ENCODE measurements at regions of chr14 and their contacts with region 1.

Region 1: GRCh38 chr14:70073924-70074566 is 114.7 kb downstream of the SLC8A3 start:
- DNase-seq: peak; percentile 83
- H3K4me3 Mint-ChIP-seq: no peak overlapping the region
- H3K27ac Mint-ChIP-seq: no peak overlapping the region
- H3K4me1 Mint-ChIP-seq: no peaks in the 10 kb centered on the region
- H3K27me3 Mint-ChIP-seq: peaks cover 13% of the 10 kb centered on the region

Region 2: GRCh38 chr14:69818757-69819191 is 255.3 kb before region 1 on chr14:
- intact Hi-C with region 1: loop called (anchors 1 kb)
- DNase-seq: peak; percentile 92
- H3K4me3 Mint-ChIP-seq: no peak overlapping the region
- H3K27ac Mint-ChIP-seq: no peak overlapping the region
- H3K4me1 Mint-ChIP-seq: peaks cover 4% of the 10 kb centered on the region
- H3K27me3 Mint-ChIP-seq: peaks cover 10% of the 10 kb centered on the region

Measured in activated CD4-positive, alpha-beta T cell treated with anti-CD3 and anti-CD28 coated beads, Interleukin-2, amount 10 ng/mL, durations not matched to agents 24 days and 14 days (primary cell).